CD4-positive, alpha-beta memory T cell (primary cell): ENCODE measurements at regions of chr19 and their contacts with region 1.

Region 1: GRCh38 chr19:12983542-12984142 is 11.6 kb upstream of the NFIX start:
- DNase-seq: peak; percentile 75 to 86 (median 82)
- H3K4me3 ChIP-seq: peak overlapping the region in 1 of 2 donors; percentile 35
- H3K4me3 Mint-ChIP-seq: no peak overlapping the region
- H3K27ac ChIP-seq: no peak overlapping the region
- H3K27ac Mint-ChIP-seq: no peak overlapping the region
- H3K4me1 ChIP-seq: peaks cover 18% of the 10 kb centered on the region
- H3K4me1 Mint-ChIP-seq: peaks cover 0 to 13% (median 4%) of the 10 kb centered on the region in 4 donors
- H3K27me3 ChIP-seq: no peaks in the 10 kb centered on the region
- H3K27me3 Mint-ChIP-seq: peaks cover under 1 to 5% of the 10 kb centered on the region in 2 donors

Region 2: DNA sequence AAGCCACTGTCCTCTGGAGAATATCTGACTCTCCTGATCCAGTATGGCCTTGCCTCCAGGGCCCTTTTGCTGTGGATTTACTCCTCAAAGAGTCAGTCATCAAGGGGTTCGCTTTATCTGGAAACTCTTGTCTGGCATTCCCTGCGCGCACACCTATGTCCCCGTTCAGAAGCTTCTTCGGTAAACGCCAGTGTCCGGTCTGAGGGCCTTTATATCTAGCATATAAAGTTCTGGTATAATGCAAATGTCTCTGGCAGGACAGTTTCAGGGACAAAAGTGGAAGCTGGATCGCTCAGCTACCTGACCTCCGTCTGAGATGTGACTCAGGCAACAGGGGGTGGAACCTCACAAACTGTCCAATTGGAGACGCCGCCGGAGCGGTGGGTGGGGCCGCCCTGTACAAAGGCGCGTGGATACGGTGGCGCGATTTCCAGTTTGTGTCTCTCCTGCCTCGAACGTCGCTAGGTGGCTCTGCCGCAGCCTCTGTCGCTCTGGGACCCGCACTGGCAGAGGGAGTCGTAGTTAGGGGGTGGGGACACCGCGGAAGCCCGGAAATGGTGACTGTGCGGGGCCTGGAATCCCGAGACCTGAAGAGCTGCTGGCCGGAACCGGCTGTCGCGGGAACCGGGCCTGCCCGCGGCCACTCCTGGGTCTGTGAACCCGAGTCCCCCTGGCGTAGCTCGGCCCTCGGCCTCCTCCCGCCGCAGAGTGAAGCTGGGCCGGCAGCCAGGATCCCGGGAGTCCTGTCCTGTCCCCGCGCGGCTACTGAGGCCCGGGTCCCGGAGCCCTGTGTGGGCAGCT is 488.4 kb before region 1 on chr19:
- CTCF ChIA-PET with region 1: no interaction called
- POLR2A ChIA-PET with region 1: no interaction called
- intact Hi-C with region 1: no loop called
- DNase-seq: peak; percentile 86 to 94 (median 92)
- H3K4me3 ChIP-seq: peak overlapping the region; percentile 62 to 64
- H3K4me3 Mint-ChIP-seq: peak overlapping the region; percentile 87 to 98 (median 92)
- H3K27ac ChIP-seq: peak overlapping the region; percentile 51
- H3K27ac Mint-ChIP-seq: peak overlapping the region; percentile 89 to 97 (median 96)
- H3K4me1 ChIP-seq: peaks cover 5% of the 10 kb centered on the region
- H3K4me1 Mint-ChIP-seq: peaks cover 7 to 16% (median 11%) of the 10 kb centered on the region in 4 donors
- H3K27me3 ChIP-seq: no peaks in the 10 kb centered on the region
- H3K27me3 Mint-ChIP-seq: no peaks in the 10 kb centered on the region

Region 3: GRCh38 chr19:12994701-12995595 is 11.3 kb after region 1 on chr19 and contains the start of gene NFIX:
- CTCF ChIA-PET with region 1: interaction called, 3 read pairs
- POLR2A ChIA-PET with region 1: no interaction called
- intact Hi-C with region 1: loop called (anchors 1 kb)
- DNase-seq: peak; percentile 41 to 59 (median 51)
- H3K4me3 ChIP-seq: peak within 1 kb of the TSS in 1 of 2 donors; percentile 67
- H3K4me3 Mint-ChIP-seq: peak within 1 kb of the TSS; percentile 88 to 97 (median 90)
- H3K27ac ChIP-seq: no peak within 1 kb of the TSS
- H3K27ac Mint-ChIP-seq: peak within 1 kb of the TSS in 6 of 7 donors; percentile 27 to 96 (median 80)
- H3K4me1 ChIP-seq: peaks cover 5% of the 10 kb centered on the region
- H3K4me1 Mint-ChIP-seq: peaks cover 10 to 19% (median 13%) of the 10 kb centered on the region in 4 donors
- H3K27me3 ChIP-seq: no peaks in the 10 kb centered on the region
- H3K27me3 Mint-ChIP-seq: peaks cover 5 to 19% of the 10 kb centered on the region in 2 donors
- total RNA-seq, gene NFIX: 4.0 to 5.4 TPM

Region 4: GRCh38 chr19:13033819-13034611 is 50.4 kb after region 1 on chr19:
- CTCF ChIA-PET with region 1: interaction called, 26 read pairs
- POLR2A ChIA-PET with region 1: no interaction called
- intact Hi-C with region 1: no loop called
- DNase-seq: peak in 1 of 5 donors; percentile 25
- H3K4me3 ChIP-seq: no peak overlapping the region
- H3K4me3 Mint-ChIP-seq: no peak overlapping the region
- H3K27ac ChIP-seq: no peak overlapping the region
- H3K27ac Mint-ChIP-seq: no peak overlapping the region
- H3K4me1 ChIP-seq: no peaks in the 10 kb centered on the region
- H3K4me1 Mint-ChIP-seq: peaks cover 0 to 1% (median 0%) of the 10 kb centered on the region in 4 donors
- H3K27me3 ChIP-seq: no peaks in the 10 kb centered on the region
- H3K27me3 Mint-ChIP-seq: peaks cover 0 to 9% of the 10 kb centered on the region in 2 donors

Region 5: DNA sequence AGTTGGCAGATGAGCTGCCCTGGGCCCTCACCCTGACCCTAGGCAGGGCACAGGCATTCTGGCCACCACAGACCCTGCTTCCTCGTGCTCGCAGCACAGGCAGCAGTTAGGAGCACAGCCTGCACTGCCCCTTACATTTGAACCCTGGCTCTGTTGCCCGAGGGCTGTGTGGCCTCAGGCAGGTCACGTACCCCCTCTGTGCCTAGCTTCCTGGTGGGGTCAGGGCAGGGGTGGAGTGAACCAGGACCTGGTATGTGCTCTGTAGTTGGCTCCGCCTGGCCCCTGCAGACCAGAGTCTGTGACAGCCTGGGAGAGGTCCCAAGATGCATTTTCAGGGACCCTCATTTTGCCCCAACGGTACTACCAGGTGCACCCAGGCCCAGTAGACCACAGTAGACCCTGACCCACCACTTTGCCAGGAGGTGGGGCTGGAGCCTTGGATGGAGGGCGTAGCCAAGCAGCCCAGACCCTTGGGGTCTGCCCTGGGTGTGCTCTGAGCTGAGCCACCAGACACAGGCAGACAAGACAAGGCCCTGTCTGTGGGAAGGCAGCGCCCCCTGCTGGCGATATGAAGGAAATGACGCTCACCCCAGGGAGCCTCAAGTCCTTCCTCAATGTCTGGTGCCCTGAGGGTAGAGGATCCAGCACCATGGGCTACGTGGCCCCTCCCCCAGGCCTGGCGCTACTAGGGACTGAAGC is 109.9 kb after region 1 on chr19:
- CTCF ChIA-PET with region 1: interaction called, 129 read pairs
- POLR2A ChIA-PET with region 1: no interaction called
- intact Hi-C with region 1: loop called (anchors 1 kb)
- DNase-seq: peak; percentile 76 to 82 (median 78)
- H3K4me3 ChIP-seq: no peak overlapping the region
- H3K4me3 Mint-ChIP-seq: peak overlapping the region in 2 of 8 donors; percentile 33 to 64
- H3K27ac ChIP-seq: no peak overlapping the region
- H3K27ac Mint-ChIP-seq: peak overlapping the region in 4 of 7 donors; percentile 24 to 68 (median 36)
- H3K4me1 ChIP-seq: peaks cover 38% of the 10 kb centered on the region
- H3K4me1 Mint-ChIP-seq: peaks cover 11 to 37% (median 18%) of the 10 kb centered on the region in 4 donors
- H3K27me3 ChIP-seq: peaks cover 15% of the 10 kb centered on the region
- H3K27me3 Mint-ChIP-seq: peaks cover 5 to 9% of the 10 kb centered on the region in 2 donors

Region 6: DNA sequence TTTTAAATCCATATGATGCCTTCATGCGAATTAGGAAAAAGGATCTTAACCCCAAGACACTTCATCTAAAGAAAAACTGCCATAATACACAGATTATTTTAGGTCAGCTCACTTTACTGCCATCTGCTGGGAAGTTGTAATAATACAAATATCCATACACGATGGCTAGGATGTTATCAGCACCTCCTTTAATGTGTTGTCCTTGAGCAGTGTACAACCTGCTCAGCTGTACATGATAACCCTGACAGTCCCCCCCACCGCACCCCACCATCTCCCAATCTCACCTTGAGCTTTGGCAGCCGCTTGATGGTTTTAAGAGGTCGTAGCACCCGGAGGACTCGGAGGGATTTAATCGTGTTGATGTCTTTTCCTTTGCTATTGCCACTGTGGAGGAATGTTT is 278.8 kb after region 1 on chr19:
- CTCF ChIA-PET with region 1: interaction called, 34 read pairs
- POLR2A ChIA-PET with region 1: no interaction called
- intact Hi-C with region 1: no loop called
- DNase-seq: peak in 4 of 5 donors; percentile 45 to 56 (median 51)
- H3K4me3 ChIP-seq: no peak overlapping the region
- H3K4me3 Mint-ChIP-seq: no peak overlapping the region
- H3K27ac ChIP-seq: no peak overlapping the region
- H3K27ac Mint-ChIP-seq: peak overlapping the region in 3 of 7 donors; percentile 35 to 59 (median 43)
- H3K4me1 ChIP-seq: no peaks in the 10 kb centered on the region
- H3K4me1 Mint-ChIP-seq: peaks cover 2 to 4% (median 3%) of the 10 kb centered on the region in 4 donors
- H3K27me3 ChIP-seq: no peaks in the 10 kb centered on the region
- H3K27me3 Mint-ChIP-seq: peaks cover 7 to 18% of the 10 kb centered on the region in 2 donors

Region 7: DNA sequence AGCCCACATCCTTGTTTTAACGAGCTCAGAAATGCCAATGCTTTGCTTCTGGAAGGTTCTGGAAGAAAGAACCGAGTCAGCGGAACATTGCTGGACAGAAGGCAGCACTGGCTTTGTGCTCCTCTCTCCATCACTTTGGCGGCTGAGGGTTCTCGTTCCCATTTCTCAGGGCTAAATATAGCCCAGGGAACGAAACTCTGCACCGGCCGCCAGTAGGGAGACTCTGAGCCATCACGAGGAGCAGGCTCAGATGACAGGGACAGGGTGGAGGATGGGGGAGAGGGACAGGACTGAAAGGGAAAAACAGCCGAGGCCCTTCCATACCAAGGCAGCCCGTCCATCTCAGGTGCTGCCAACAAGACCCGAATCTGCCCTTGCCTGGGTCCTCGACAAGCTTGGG is 356.2 kb after region 1 on chr19:
- CTCF ChIA-PET with region 1: no interaction called
- POLR2A ChIA-PET with region 1: no interaction called
- intact Hi-C with region 1: no loop called
- DNase-seq: no peak
- H3K4me3 ChIP-seq: no peak overlapping the region
- H3K4me3 Mint-ChIP-seq: no peak overlapping the region
- H3K27ac ChIP-seq: no peak overlapping the region
- H3K27ac Mint-ChIP-seq: no peak overlapping the region
- H3K4me1 ChIP-seq: no peaks in the 10 kb centered on the region
- H3K4me1 Mint-ChIP-seq: no peaks in the 10 kb centered on the region
- H3K27me3 ChIP-seq: no peaks in the 10 kb centered on the region
- H3K27me3 Mint-ChIP-seq: peaks cover 18 to 23% of the 10 kb centered on the region in 2 donors